CD4-positive, alpha-beta memory T cell (primary cell): ENCODE measurements at regions of chr5 and their contacts with region 1.

Region 1: GRCh38 chr5:68279984-68280383 is 64.4 kb downstream of the PIK3R1 start:
- DNase-seq: peak; percentile 78 to 88 (median 84)
- H3K4me3 ChIP-seq: peak overlapping the region; percentile 76 to 77
- H3K4me3 Mint-ChIP-seq: peak overlapping the region; percentile 89 to 97 (median 94)
- H3K27ac ChIP-seq: peak overlapping the region; percentile 66
- H3K27ac Mint-ChIP-seq: peak overlapping the region; percentile 89 to 99 (median 96)
- H3K4me1 ChIP-seq: peaks cover 81% of the 10 kb centered on the region
- H3K4me1 Mint-ChIP-seq: peaks cover 66 to 91% (median 75%) of the 10 kb centered on the region in 4 donors
- H3K27me3 ChIP-seq: no peaks in the 10 kb centered on the region
- H3K27me3 Mint-ChIP-seq: no peaks in the 10 kb centered on the region

Region 2: DNA sequence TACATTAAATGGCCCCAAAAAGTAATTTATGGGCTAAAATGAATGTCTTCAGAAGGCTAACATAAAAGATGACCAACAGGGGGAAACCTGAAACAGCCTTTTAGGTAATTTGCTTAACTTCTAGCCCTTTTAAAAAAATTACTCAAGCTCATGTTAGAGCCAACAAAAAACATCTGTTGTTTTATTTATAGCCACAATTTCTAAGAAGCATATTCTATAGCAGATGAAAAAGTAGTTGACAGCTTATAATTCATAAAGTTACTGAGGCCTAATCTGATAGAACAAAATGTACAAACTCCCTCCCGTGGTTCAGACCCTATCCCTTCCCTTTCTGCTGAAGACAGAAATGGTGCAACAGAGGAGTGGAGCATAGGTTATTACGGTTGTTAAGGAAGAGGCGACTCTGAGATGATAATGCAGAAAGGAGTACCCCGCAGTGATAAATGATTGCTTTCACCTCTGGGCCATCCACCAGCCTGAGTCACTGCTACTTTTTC is 18.4 kb before region 1 on chr5:
- CTCF ChIA-PET with region 1: interaction called, 6 read pairs
- POLR2A ChIA-PET with region 1: interaction called, 179 read pairs
- intact Hi-C with region 1: no loop called
- DNase-seq: no peak
- H3K4me3 ChIP-seq: no peak overlapping the region
- H3K4me3 Mint-ChIP-seq: peak overlapping the region in 3 of 8 donors; percentile 17 to 47 (median 31)
- H3K27ac ChIP-seq: no peak overlapping the region
- H3K27ac Mint-ChIP-seq: peak overlapping the region; percentile 22 to 78 (median 68)
- H3K4me1 ChIP-seq: peaks cover 93% of the 10 kb centered on the region
- H3K4me1 Mint-ChIP-seq: peaks cover 78 to 93% (median 85%) of the 10 kb centered on the region in 4 donors
- H3K27me3 ChIP-seq: no peaks in the 10 kb centered on the region
- H3K27me3 Mint-ChIP-seq: no peaks in the 10 kb centered on the region

Region 3: GRCh38 chr5:68303038-68303738 is 23.2 kb after region 1 on chr5:
- CTCF ChIA-PET with region 1: no interaction called
- POLR2A ChIA-PET with region 1: no interaction called
- intact Hi-C with region 1: no loop called
- DNase-seq: no peak
- H3K4me3 ChIP-seq: no peak overlapping the region
- H3K4me3 Mint-ChIP-seq: no peak overlapping the region
- H3K27ac ChIP-seq: no peak overlapping the region
- H3K27ac Mint-ChIP-seq: peak overlapping the region in 5 of 7 donors; percentile 43 to 74 (median 66)
- H3K4me1 ChIP-seq: peaks cover 6% of the 10 kb centered on the region
- H3K4me1 Mint-ChIP-seq: peaks cover 14 to 36% (median 19%) of the 10 kb centered on the region in 4 donors
- H3K27me3 ChIP-seq: no peaks in the 10 kb centered on the region
- H3K27me3 Mint-ChIP-seq: no peaks in the 10 kb centered on the region

Region 4: GRCh38 chr5:68406767-68407241 is 126.8 kb after region 1 on chr5:
- CTCF ChIA-PET with region 1: no interaction called
- POLR2A ChIA-PET with region 1: no interaction called
- intact Hi-C with region 1: no loop called
- DNase-seq: peak in 1 of 5 donors; percentile 6
- H3K4me3 ChIP-seq: no peak overlapping the region
- H3K4me3 Mint-ChIP-seq: peak overlapping the region in 7 of 8 donors; percentile 23 to 80 (median 57)
- H3K27ac ChIP-seq: no peak overlapping the region
- H3K27ac Mint-ChIP-seq: peak overlapping the region in 5 of 7 donors; percentile 61 to 87 (median 70)
- H3K4me1 ChIP-seq: peaks cover 21% of the 10 kb centered on the region
- H3K4me1 Mint-ChIP-seq: peaks cover 20 to 32% (median 21%) of the 10 kb centered on the region in 4 donors
- H3K27me3 ChIP-seq: no peaks in the 10 kb centered on the region
- H3K27me3 Mint-ChIP-seq: peaks cover 0 to 2% of the 10 kb centered on the region in 2 donors

Region 5: GRCh38 chr5:68433923-68434879 is 154.2 kb after region 1 on chr5:
- CTCF ChIA-PET with region 1: interaction called, 5 read pairs
- POLR2A ChIA-PET with region 1: interaction called, 11 read pairs
- intact Hi-C with region 1: no loop called
- DNase-seq: peak; percentile 76 to 98 (median 83)
- H3K4me3 ChIP-seq: peak overlapping the region; percentile 7 to 42
- H3K4me3 Mint-ChIP-seq: peak overlapping the region; percentile 73 to 89 (median 80)
- H3K27ac ChIP-seq: peak overlapping the region; percentile 54
- H3K27ac Mint-ChIP-seq: peak overlapping the region; percentile 88 to 95 (median 91)
- H3K4me1 ChIP-seq: peaks cover 40% of the 10 kb centered on the region
- H3K4me1 Mint-ChIP-seq: peaks cover 29 to 39% (median 36%) of the 10 kb centered on the region in 4 donors
- H3K27me3 ChIP-seq: no peaks in the 10 kb centered on the region
- H3K27me3 Mint-ChIP-seq: no peaks in the 10 kb centered on the region